CD8-positive, alpha-beta T cell (primary cell): ENCODE measurements at regions of chrX and their contacts with region 1.

Region 1: DNA sequence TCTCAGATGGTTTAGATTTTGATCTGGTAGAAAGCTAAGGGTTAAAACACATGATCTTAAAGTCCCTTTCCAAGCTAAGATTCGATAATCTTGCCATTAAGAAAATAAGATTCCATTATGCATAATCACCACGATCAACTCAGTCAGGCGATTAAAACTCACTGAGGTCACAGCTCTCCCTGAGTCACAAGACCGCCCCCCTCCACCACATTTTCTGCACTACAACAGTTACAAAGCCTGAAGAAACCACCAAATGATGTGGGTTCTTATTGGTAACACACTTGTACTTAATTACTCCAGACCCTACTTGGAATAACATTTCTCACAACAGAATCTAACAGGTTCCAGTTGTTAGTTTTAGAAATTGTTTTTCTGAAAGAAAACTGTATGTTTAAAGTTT is 62.8 kb downstream of the SH3KBP1 start:
- DNase-seq: peak in 6 of 9 experiments; percentile 44 to 73 (median 55)
- ATAC-seq: peak; percentile 76
- H3K4me3 ChIP-seq: no peak overlapping the region
- H3K4me3 Mint-ChIP-seq: peak overlapping the region; percentile 22
- H3K27ac ChIP-seq: no peak overlapping the region
- H3K27ac Mint-ChIP-seq: no peak overlapping the region
- H3K4me1 ChIP-seq: peaks cover 27% of the 10 kb centered on the region
- H3K4me1 Mint-ChIP-seq: peaks cover 42% of the 10 kb centered on the region
- H3K27me3 ChIP-seq: no peaks in the 10 kb centered on the region
- H3K27me3 Mint-ChIP-seq: no peaks in the 10 kb centered on the region
- CTCF ChIP-seq: no peak

Region 2: GRCh38 chrX:19709812-19710518 is 114.6 kb before region 1 on chrX:
- CTCF ChIA-PET with region 1: no interaction called
- POLR2A ChIA-PET with region 1: no interaction called
- intact Hi-C with region 1: no loop called
- DNase-seq: no peak
- ATAC-seq: no peak
- H3K4me3 ChIP-seq: no peak overlapping the region
- H3K4me3 Mint-ChIP-seq: no peak overlapping the region
- H3K27ac ChIP-seq: no peak overlapping the region
- H3K27ac Mint-ChIP-seq: peak overlapping the region; percentile 78
- H3K4me1 ChIP-seq: peaks cover 20% of the 10 kb centered on the region
- H3K4me1 Mint-ChIP-seq: peaks cover 52% of the 10 kb centered on the region
- H3K27me3 ChIP-seq: no peaks in the 10 kb centered on the region
- H3K27me3 Mint-ChIP-seq: no peaks in the 10 kb centered on the region
- CTCF ChIP-seq: no peak

Region 3: DNA sequence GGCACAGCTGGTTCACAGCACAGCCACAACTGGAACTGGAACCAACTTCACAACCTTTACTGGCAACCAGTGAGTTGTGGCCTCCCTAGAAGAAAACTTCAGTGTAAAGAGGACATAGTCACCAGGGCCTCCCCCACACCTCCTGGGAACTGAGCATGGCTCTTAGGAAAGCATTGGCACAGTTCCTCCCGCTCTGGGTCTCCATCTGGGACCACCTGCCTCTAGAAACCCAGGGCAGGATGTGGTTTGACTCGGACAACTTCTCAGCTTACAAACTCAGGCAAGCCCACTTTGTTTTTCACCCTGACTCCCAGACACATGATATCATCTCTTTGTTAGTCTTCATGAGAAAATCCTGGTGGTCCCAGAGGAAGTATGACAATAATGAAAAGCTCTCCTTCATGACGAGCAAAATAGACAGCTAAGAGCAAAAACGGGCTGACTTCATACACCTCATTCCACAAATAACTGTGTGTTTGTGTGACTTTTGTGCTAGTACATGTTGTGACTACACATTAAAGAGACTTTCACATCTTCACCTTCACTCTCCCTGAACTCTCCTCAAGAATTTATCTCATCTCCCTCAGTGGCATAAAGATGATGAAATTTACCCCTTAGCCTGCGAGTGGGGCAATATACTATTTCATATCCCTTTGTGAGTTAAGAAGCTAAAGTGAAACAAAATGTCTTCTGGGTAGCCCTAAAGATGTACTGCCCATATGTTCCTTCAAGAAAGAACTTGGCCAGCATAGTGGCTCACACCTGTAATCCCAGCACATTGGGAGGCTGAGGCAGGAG is 12.6 kb before region 1 on chrX:
- CTCF ChIA-PET with region 1: no interaction called
- POLR2A ChIA-PET with region 1: interaction called, 3 read pairs
- intact Hi-C with region 1: loop called in 1 of 2 experiments (anchors 2 kb)
- DNase-seq: peak in 2 of 9 experiments; percentile 37 to 41
- ATAC-seq: no peak
- H3K4me3 ChIP-seq: no peak overlapping the region
- H3K4me3 Mint-ChIP-seq: peak overlapping the region; percentile 27
- H3K27ac ChIP-seq: peak overlapping the region in 1 of 2 experiments; percentile 68
- H3K27ac Mint-ChIP-seq: peak overlapping the region; percentile 73
- H3K4me1 ChIP-seq: peaks cover 32% of the 10 kb centered on the region
- H3K4me1 Mint-ChIP-seq: peaks cover 68% of the 10 kb centered on the region
- H3K27me3 ChIP-seq: no peaks in the 10 kb centered on the region
- H3K27me3 Mint-ChIP-seq: no peaks in the 10 kb centered on the region
- CTCF ChIP-seq: no peak

Region 4: GRCh38 chrX:19865567-19866363 is 41.2 kb after region 1 on chrX:
- CTCF ChIA-PET with region 1: no interaction called
- POLR2A ChIA-PET with region 1: no interaction called
- intact Hi-C with region 1: loop called in 1 of 2 experiments (anchors 5 kb)
- DNase-seq: peak in 1 of 9 experiments; percentile 28
- ATAC-seq: no peak
- H3K4me3 ChIP-seq: no peak overlapping the region
- H3K4me3 Mint-ChIP-seq: no peak overlapping the region
- H3K27ac ChIP-seq: no peak overlapping the region
- H3K27ac Mint-ChIP-seq: peak overlapping the region; percentile 5
- H3K4me1 ChIP-seq: peaks cover 40% of the 10 kb centered on the region
- H3K4me1 Mint-ChIP-seq: peaks cover 68% of the 10 kb centered on the region
- H3K27me3 ChIP-seq: no peaks in the 10 kb centered on the region
- H3K27me3 Mint-ChIP-seq: no peaks in the 10 kb centered on the region
- CTCF ChIP-seq: no peak